Transverse colon (tissue), 4 donors: ENCODE measurements at regions of chr1 and their contacts with region 1.

Region 1: GRCh38 chr1:159891275-159892157 is 8.4 kb downstream of the CFAP45 start:
- DNase-seq: peak; percentile 90
- H3K4me3 ChIP-seq: no peak overlapping the region
- H3K27ac ChIP-seq: no peak overlapping the region
- H3K4me1 ChIP-seq: peaks cover 0 to 12% (median 4%) of the 10 kb centered on the region in 4 donors
- H3K27me3 ChIP-seq: no peaks in the 10 kb centered on the region
- CTCF ChIP-seq: peak; percentile 92 to 99 (median 94)
- EP300 ChIP-seq: no peak
- POLR2A ChIP-seq: no peak

Region 2: DNA sequence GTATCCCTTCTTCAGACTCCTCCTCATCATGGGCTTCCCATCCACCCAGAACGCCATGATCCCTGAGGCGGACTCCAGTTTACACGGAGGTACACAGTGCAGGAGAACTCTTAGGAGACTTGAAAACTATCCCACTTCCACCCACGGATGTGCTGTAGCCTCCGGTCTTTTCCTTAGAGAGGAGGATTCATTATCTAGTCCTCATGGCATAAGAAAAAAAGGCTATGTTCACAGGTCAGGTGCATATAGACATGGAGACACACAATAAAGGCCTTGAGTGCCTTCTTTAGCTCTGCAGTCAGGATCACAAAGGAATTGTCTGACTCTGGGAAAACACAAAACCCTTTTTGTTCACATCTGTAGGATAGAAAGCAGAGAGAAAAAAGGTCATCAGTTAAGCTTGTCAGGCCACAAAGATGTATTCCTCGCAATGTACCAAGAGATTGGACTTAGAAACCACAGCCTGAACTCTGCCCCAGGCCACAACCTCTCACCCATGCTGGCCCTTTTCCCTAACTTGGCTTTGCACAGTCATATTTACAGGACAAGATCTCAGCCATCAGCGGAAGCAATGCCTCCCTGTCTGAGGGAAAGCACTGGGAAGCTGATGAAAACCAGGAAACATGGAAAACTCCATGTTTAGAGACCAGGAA is 186.1 kb before region 1 on chr1:
- in situ Hi-C with region 1: no loop called
- intact Hi-C with region 1: no loop called
- DNase-seq: no peak
- H3K4me3 ChIP-seq: no peak overlapping the region
- H3K27ac ChIP-seq: no peak overlapping the region
- H3K4me1 ChIP-seq: no peaks in the 10 kb centered on the region
- H3K27me3 ChIP-seq: no peaks in the 10 kb centered on the region
- CTCF ChIP-seq: no peak
- EP300 ChIP-seq: no peak
- POLR2A ChIP-seq: no peak

Region 3: DNA sequence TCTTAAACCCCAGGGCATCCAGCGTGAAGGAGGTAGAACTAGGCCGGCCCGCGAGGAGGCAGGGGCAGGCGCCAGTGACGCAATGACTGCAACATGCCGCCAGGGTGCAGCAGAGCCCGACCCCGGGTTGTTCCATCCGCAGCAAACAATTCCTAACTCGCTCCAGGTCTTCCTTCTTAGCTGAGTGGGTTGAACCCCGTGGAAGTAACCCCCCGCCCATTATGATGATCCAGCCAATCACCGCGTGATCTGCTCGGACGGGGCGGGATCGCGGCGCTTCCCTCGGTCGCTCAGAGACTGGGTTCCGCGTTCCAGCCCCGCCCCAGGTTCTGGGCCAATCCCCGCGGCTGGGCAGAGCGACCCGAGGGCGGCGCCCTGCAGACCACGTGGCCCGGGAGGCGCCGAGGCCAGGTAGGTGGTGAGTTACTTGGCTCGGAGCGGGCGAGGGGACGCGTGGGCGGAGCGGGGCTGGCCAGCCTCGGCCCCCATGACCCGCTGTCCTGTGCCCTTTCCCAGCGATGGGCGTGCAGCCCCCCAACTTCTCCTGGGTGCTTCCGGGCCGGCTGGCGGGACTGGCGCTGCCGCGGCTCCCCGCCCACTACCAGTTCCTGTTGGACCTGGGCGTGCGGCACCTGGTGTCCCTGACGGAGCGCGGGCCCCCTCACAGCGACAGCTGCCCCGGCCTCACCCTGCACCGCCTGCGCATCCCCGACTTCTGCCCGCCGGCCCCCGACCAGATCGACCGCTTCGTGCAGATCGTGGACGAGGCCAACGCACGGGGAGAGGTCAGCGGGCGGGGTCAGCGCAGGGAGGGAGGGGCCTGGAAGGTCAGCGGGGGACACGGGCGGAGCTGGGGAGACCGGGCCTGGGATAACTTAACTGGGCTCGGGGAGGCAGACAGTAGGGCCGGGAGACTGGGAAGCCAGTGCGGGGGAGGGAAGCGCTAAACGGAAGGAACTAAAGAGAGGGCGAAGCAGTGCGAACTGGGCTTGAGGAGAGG is 110.6 kb before region 1 on chr1 and contains the start of gene DUSP23:
- in situ Hi-C with region 1: loop called in 1 of 4 experiments (anchors 10 kb)
- intact Hi-C with region 1: no loop called
- DNase-seq: peak; percentile 98
- H3K4me3 ChIP-seq: peak within 1 kb of the TSS; percentile 62 to 90 (median 70)
- H3K27ac ChIP-seq: peak within 1 kb of the TSS; percentile 81 to 90 (median 87)
- H3K4me1 ChIP-seq: peaks cover 0 to 15% (median 2%) of the 10 kb centered on the region in 4 donors
- H3K27me3 ChIP-seq: no peaks in the 10 kb centered on the region
- CTCF ChIP-seq: peak; percentile 86 to 99 (median 95)
- EP300 ChIP-seq: no peak
- POLR2A ChIP-seq: peak; percentile 94
- total RNA-seq, gene DUSP23: 9.7 to 96.4 (median 72.3) TPM

Region 4: GRCh38 chr1:159790237-159790917 is 101.1 kb before region 1 on chr1:
- in situ Hi-C with region 1: loop called (anchors 5 to 10 kb)
- intact Hi-C with region 1: loop called (anchors 5 kb)
- DNase-seq: no peak
- H3K4me3 ChIP-seq: no peak overlapping the region
- H3K27ac ChIP-seq: no peak overlapping the region
- H3K4me1 ChIP-seq: no peaks in the 10 kb centered on the region
- H3K27me3 ChIP-seq: peaks cover 6% of the 10 kb centered on the region
- CTCF ChIP-seq: peak; percentile 47 to 56 (median 50)
- EP300 ChIP-seq: no peak
- POLR2A ChIP-seq: no peak

Region 5: DNA sequence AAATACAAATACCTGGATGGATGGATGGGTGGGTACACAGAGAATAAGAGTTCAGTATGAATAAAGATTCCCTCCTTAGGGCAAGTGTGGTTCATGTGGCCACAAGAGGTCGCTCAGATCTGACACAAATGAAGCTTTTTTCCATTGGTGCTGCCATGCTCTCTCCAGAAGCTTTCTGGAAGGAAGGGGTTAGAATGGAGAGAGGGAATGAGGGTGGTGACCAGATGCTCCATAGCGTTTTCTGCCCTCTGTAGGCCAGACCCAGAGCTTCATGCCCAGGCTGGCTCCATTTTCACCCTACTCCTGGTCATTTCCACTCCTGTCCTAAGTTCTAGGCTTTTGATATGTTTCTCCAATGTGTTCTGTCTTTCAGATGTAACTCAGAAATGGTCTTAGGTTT is 92.6 kb before region 1 on chr1:
- in situ Hi-C with region 1: loop called in 3 of 4 experiments (anchors 5 kb)
- intact Hi-C with region 1: loop called (anchors 5 kb)
- DNase-seq: peak; percentile 72
- H3K4me3 ChIP-seq: no peak overlapping the region
- H3K27ac ChIP-seq: no peak overlapping the region
- H3K4me1 ChIP-seq: peaks cover 0 to 2% (median 0%) of the 10 kb centered on the region in 4 donors
- H3K27me3 ChIP-seq: peaks cover 5% of the 10 kb centered on the region
- CTCF ChIP-seq: peak; percentile 65 to 87 (median 74)
- EP300 ChIP-seq: no peak
- POLR2A ChIP-seq: no peak